Caco-2 (cell line): ENCODE measurements at regions of chr2 and their contacts with region 1.

Region 1: GRCh38 chr2:219206442-219207253 is at the start of gene ZFAND2B:
- DNase-seq: peak; percentile 93 to 98
- H3K4me3 ChIP-seq: peak within 1 kb of the TSS; percentile 78
- H3K4me3 Mint-ChIP-seq: peak within 1 kb of the TSS; percentile 81
- H3K27ac Mint-ChIP-seq: peak within 1 kb of the TSS; percentile 84
- H3K4me1 ChIP-seq: peaks cover 8% of the 10 kb centered on the region
- H3K4me1 Mint-ChIP-seq: peaks cover 5% of the 10 kb centered on the region
- H3K27me3 ChIP-seq: no peaks in the 10 kb centered on the region
- H3K27me3 Mint-ChIP-seq: no peaks in the 10 kb centered on the region
- CTCF ChIP-seq: no peak
- total RNA-seq, gene ZFAND2B: 37.3 and 41.8 TPM in 2 replicates

Region 2: DNA sequence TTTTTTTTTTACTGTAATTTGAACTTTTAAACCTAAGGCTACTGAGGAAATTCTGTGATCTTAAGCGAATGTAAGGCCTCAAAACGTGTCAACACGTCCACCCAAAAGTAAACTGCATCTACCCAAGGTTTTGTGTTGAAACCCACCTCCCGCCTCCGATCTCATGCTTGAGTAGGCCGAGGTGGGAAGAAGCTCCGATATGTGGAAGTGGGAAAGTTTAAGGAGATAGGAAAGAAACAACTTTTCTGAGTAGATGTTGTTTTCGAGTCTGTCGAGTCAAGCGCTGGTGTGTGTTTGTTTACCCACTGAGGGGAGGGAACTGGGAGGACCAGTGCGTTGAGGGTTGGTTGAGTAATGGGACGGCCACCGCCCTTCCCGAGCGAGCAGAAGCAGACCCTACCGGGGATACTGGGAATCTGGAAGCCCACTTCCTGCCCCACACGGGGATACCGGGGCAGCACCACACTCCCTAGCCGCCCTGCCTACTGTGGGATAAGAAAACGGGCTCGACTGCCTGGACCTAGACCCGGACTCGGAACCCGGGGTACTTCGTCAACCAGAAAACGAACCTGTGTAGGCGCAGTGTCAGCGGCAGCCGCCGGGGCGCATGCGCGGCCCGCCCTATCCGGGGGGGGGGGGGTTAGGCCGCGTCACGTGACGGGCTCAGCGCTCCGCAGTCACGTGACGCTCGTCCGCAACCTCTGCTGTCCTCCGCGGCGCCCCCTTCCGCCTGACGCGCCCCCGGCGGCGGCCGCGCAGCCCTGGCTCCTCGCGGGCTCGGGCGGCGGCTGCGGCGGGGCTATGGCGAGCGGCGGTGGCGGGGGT is 28.9 kb before region 1 on chr2 and contains the start of gene RETREG2:
- CTCF ChIA-PET with region 1: interaction called, 13 read pairs
- POLR2A ChIA-PET with region 1: interaction called, 9 read pairs
- intact Hi-C with region 1: loop called (anchors 1 kb)
- DNase-seq: peak; percentile 89 to 90
- H3K4me3 ChIP-seq: peak within 1 kb of the TSS; percentile 93
- H3K4me3 Mint-ChIP-seq: peak within 1 kb of the TSS; percentile 90
- H3K27ac Mint-ChIP-seq: peak within 1 kb of the TSS; percentile 89
- H3K4me1 ChIP-seq: peaks cover 12% of the 10 kb centered on the region
- H3K4me1 Mint-ChIP-seq: peaks cover 18% of the 10 kb centered on the region
- H3K27me3 ChIP-seq: no peaks in the 10 kb centered on the region; the same call in 1 of the 2 replicates
- H3K27me3 Mint-ChIP-seq: no peaks in the 10 kb centered on the region
- CTCF ChIP-seq: peak; percentile 17 to 38
- total RNA-seq, gene RETREG2: 59.5 and 62.0 TPM in 2 replicates

Region 3: DNA sequence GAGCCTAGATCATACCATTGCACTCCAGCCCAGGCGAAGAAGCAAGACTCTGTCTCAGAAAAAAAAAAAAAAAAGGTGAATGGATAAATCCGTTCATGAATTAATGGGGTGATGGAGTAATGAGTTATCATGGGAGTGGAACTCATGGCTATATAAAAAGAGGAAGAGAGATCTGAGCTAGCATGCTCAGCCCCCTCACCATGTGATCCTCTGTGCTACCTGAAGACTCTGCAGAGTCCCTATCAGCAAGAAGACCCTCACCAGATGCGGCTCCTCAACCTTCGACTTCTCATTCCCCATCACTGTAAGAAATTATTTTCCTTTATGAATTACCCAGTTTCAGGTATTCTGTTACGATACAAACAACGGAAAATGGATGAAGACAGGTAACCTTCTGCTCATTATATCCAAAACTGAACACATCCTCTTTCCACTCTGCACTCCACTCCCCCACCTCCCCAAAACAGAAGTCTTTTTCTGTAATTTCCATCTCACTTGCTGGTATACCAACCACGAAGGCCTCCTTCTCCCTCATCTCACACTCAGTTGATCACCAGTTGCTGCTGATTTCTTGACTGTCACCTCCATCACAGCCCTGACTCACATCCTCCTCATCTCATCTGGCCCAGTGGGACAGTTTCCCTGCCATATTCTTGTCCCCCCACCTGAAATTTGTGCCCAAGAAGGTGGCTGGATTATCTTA is 19.7 kb before region 1 on chr2:
- CTCF ChIA-PET with region 1: interaction called, 11 read pairs
- POLR2A ChIA-PET with region 1: no interaction called
- intact Hi-C with region 1: no loop called
- DNase-seq: no peak
- H3K4me3 ChIP-seq: no peak overlapping the region
- H3K4me3 Mint-ChIP-seq: no peak overlapping the region
- H3K27ac Mint-ChIP-seq: no peak overlapping the region
- H3K4me1 ChIP-seq: no peaks in the 10 kb centered on the region
- H3K4me1 Mint-ChIP-seq: no peaks in the 10 kb centered on the region
- H3K27me3 ChIP-seq: no peaks in the 10 kb centered on the region
- H3K27me3 Mint-ChIP-seq: no peaks in the 10 kb centered on the region
- CTCF ChIP-seq: no peak

Region 4: GRCh38 chr2:219218732-219219701 is 12.4 kb after region 1 on chr2 and contains the start of gene ABCB6:
- CTCF ChIA-PET with region 1: interaction called, 8 read pairs
- POLR2A ChIA-PET with region 1: interaction called, 29 read pairs
- intact Hi-C with region 1: loop called (anchors 1 kb)
- DNase-seq: peak; percentile 97
- H3K4me3 ChIP-seq: peak within 1 kb of the TSS; percentile 89
- H3K4me3 Mint-ChIP-seq: peak within 1 kb of the TSS; percentile 96
- H3K27ac Mint-ChIP-seq: peak within 1 kb of the TSS; percentile 95
- H3K4me1 ChIP-seq: peaks cover 18% of the 10 kb centered on the region
- H3K4me1 Mint-ChIP-seq: no peaks in the 10 kb centered on the region
- H3K27me3 ChIP-seq: no peaks in the 10 kb centered on the region
- H3K27me3 Mint-ChIP-seq: no peaks in the 10 kb centered on the region
- CTCF ChIP-seq: no peak
- total RNA-seq, gene ABCB6: 66.0 and 68.6 TPM in 2 replicates

Region 5: DNA sequence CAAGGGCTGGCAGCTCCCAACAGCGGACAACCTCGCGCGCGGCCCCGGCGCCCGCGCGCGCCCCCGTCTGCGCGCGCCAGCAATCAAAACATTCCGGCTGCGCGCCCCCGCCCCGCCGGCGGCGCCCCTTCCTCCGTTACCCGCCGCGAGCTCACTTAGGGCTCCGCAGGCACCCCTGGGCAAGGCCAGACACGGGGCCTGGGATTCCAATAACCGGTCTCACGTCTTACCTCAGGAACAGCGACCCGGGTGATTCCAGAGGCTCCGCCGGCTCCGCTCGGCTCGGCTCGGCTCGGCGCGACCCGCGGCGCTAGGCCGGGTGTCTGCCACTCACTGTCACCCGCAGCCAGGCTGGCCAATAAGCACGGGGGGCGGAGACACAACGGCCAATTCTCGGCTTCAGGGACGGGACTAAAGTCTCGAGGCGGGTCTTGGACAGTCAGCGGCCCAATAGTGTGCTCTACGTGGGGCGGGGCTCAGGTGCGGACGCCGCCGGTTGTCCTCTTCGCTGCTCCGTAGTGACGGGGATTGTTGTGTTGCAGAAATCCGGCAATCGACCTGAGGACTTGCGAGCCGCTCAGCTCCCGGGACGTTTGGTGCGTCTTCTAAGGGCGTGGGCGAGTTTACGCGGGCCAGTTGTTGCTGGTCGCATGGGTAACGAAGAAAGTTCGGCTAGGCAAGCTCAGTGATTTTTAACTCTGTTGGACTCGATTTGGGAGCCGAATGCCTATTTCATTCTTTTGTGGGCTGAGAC is 22.8 kb after region 1 on chr2 and contains the starts of genes ANKZF1 and ATG9A:
- CTCF ChIA-PET with region 1: interaction called, 4 read pairs
- POLR2A ChIA-PET with region 1: no interaction called
- intact Hi-C with region 1: loop called (anchors 1 kb)
- DNase-seq: peak; percentile 99
- H3K4me3 ChIP-seq: peak within 1 kb of the TSS; percentile 69
- H3K4me3 Mint-ChIP-seq: peak within 1 kb of the TSS; percentile 100
- H3K27ac Mint-ChIP-seq: peak within 1 kb of the TSS; percentile 100
- H3K4me1 ChIP-seq: 0 out of 2 replicates have a peak, but pooled peaks cover 4% of the 10 kb centered on the region
- H3K4me1 Mint-ChIP-seq: no peaks in the 10 kb centered on the region
- H3K27me3 ChIP-seq: no peaks in the 10 kb centered on the region
- H3K27me3 Mint-ChIP-seq: no peaks in the 10 kb centered on the region
- CTCF ChIP-seq: no peak
- total RNA-seq, gene ANKZF1: 50.7 and 51.5 TPM in 2 replicates
- total RNA-seq, gene ATG9A: 59.6 and 62.9 TPM in 2 replicates

Region 6: GRCh38 chr2:219245148-219245898 is 38.7 kb after region 1 on chr2 and contains the starts of genes GLB1L and STK16:
- CTCF ChIA-PET with region 1: interaction called, 6 read pairs
- POLR2A ChIA-PET with region 1: interaction called, 14 read pairs
- intact Hi-C with region 1: no loop called
- DNase-seq: peak; percentile 94
- H3K4me3 ChIP-seq: peak within 1 kb of the TSS; percentile 73
- H3K4me3 Mint-ChIP-seq: peak within 1 kb of the TSS; percentile 82
- H3K27ac Mint-ChIP-seq: peak within 1 kb of the TSS; percentile 90
- H3K4me1 ChIP-seq: peaks cover 33% of the 10 kb centered on the region
- H3K4me1 Mint-ChIP-seq: peaks cover 23% of the 10 kb centered on the region
- H3K27me3 ChIP-seq: no peaks in the 10 kb centered on the region
- H3K27me3 Mint-ChIP-seq: no peaks in the 10 kb centered on the region
- CTCF ChIP-seq: no peak
- total RNA-seq, gene GLB1L: 3.3 and 4.3 TPM in 2 replicates
- total RNA-seq, gene STK16: 26.1 and 26.6 TPM in 2 replicates

Region 7: DNA sequence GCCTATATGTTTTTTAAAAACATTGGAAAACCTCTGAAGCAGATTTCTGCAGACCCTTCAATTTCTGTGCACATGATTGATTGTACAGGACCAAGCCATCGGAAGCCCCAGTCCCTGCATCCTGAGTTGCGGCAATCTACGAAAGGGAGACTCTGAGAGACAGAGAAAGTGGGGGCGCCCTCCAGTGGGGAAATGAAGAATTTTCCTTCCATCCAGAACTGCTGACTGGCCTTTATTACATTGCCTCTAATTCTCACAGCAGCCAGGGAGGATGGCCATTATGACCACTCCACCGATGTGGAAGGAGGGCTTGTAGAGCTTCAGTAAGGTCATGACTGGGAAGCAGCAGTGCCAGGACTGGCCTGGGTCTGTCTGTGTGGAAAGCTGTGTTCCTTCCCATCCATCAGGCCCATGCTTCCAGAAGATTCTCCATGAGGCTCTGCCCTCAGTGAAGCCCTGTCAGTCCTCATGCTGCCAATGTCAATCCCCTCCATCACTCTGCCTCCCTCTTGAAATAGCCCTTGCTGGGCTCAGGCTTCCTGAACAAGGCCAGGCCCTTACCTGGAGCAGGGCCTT is 145.9 kb after region 1 on chr2:
- CTCF ChIA-PET with region 1: no interaction called
- POLR2A ChIA-PET with region 1: no interaction called
- intact Hi-C with region 1: no loop called
- DNase-seq: peak; percentile 56 to 69
- H3K4me3 ChIP-seq: no peak overlapping the region
- H3K4me3 Mint-ChIP-seq: no peak overlapping the region
- H3K27ac Mint-ChIP-seq: no peak overlapping the region
- H3K4me1 ChIP-seq: no peaks in the 10 kb centered on the region
- H3K4me1 Mint-ChIP-seq: no peaks in the 10 kb centered on the region
- H3K27me3 ChIP-seq: no peaks in the 10 kb centered on the region
- H3K27me3 Mint-ChIP-seq: peaks cover 16% of the 10 kb centered on the region
- CTCF ChIP-seq: peak; percentile 51 to 54